ENCODE measurements at regions of chr1 and their contacts with region 1.

Region 1: GRCh38 chr1:111611986-111612385 is 7.6 kb upstream of the RAP1A start:
- DNase-seq: no peak
- ATAC-seq: peak; percentile 25; the same call in 1 of the 2 replicates
- H3K4me3 ChIP-seq: no peak overlapping the region
- H3K27ac ChIP-seq: no peak overlapping the region
- H3K4me1 ChIP-seq: peaks cover 4% of the 10 kb centered on the region
- H3K27me3 ChIP-seq: no peaks in the 10 kb centered on the region
- CTCF ChIP-seq: no peak
- POLR2A ChIP-seq: no peak
- RAD21 ChIP-seq: no peak

Region 2: GRCh38 chr1:111570781-111571181 is 41.2 kb before region 1 on chr1:
- CTCF ChIA-PET with region 1: no interaction called
- POLR2A ChIA-PET with region 1: no interaction called
- dilution Hi-C with region 1: no loop called
- in situ Hi-C with region 1: no loop called
- intact Hi-C with region 1: loop called (anchors 5 kb)
- DNase-seq: peak; percentile 35
- ATAC-seq: no peak
- H3K4me3 ChIP-seq: no peak overlapping the region
- H3K27ac ChIP-seq: no peak overlapping the region
- H3K4me1 ChIP-seq: peaks cover 18% of the 10 kb centered on the region
- H3K27me3 ChIP-seq: no peaks in the 10 kb centered on the region
- CTCF ChIP-seq: peak; percentile 21; the same call in 1 of the 2 replicates
- POLR2A ChIP-seq: no peak
- RAD21 ChIP-seq: no peak